AG04449 (cell line): ENCODE measurements at regions of chr9 and their contacts with region 1.

Region 1: DNA sequence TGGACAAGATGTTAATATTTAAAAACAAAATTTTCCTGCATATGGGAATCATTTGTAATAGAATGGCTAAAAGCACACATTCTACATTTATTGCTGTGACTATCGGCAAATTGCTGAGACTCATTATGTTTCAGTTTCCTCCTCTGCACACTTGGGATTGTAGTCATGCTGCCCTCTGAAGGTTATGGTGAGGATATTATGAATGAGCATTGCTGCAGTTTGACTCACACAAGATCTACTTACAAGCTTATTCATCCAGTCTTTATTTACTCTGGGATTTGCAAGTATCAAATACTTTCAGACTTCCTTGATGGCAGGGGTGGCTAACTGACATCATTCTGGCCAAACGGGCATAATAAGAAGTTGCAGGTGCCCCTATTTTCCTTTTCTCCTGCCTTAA is 9.5 kb upstream of the NFIL3 start:
- DNase-seq: peak; percentile 91
- H3K4me3 ChIP-seq: no peak overlapping the region
- CTCF ChIP-seq: peak; percentile 52

Region 2: GRCh38 chr9:91036826-91037510 is 396.2 kb before region 1 on chr9:
- CTCF ChIA-PET with region 1: interaction called, 18 read pairs
- POLR2A ChIA-PET with region 1: no interaction called
- DNase-seq: peak; percentile 66
- H3K4me3 ChIP-seq: peak overlapping the region; percentile 8; the same call in 1 of the 2 replicates
- CTCF ChIP-seq: peak; percentile 72

Region 3: DNA sequence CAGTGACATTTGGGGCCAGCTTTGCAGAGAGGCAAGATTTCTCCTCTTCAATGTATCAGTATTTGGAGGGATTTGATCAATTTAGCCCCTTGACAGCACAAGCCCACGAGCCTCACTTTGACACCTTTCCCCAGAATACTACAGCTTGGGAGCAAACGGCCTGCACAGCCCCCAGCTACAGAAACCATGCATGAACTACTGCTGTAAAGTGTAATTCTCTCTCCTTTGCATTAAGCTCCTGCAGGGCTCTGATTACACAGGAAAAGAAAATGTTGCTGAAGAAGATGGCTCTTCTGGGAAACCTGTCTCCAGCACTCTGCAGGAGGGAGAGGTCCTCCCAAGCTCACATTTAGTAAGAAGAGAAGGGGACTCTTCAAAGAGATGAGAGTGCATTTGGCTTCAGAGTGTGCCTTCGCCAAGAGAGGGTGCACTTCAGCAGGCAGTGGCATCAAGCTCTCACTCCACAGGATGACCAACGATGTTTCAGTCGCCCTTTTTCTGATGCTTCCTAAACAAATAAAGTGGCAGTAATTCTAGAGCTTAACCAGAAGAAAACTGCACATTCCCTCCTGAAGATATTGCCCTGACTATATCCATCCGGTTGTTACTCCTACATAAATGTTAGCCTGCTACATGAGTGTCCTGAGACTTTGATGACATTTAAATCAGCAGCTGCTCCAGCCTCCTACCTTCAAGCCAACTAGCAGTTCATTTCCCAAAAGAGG is 343.6 kb before region 1 on chr9:
- CTCF ChIA-PET with region 1: interaction called, 28 read pairs
- POLR2A ChIA-PET with region 1: no interaction called
- DNase-seq: no peak
- H3K4me3 ChIP-seq: no peak overlapping the region
- CTCF ChIP-seq: peak; percentile 72

Region 4: GRCh38 chr9:91422758-91423711 is 10.1 kb before region 1 on chr9:
- CTCF ChIA-PET with region 1: interaction called, 12 read pairs
- POLR2A ChIA-PET with region 1: interaction called, 10 read pairs
- DNase-seq: no peak
- H3K4me3 ChIP-seq: peak overlapping the region; percentile 87
- CTCF ChIP-seq: peak; percentile 44

Region 5: GRCh38 chr9:91443321-91443993 is 10.3 kb after region 1 on chr9:
- CTCF ChIA-PET with region 1: interaction called, 24 read pairs
- POLR2A ChIA-PET with region 1: interaction called, 3 read pairs
- DNase-seq: no peak
- H3K4me3 ChIP-seq: no peak overlapping the region
- CTCF ChIP-seq: no peak